AG04450 (cell line): ENCODE measurements at regions of chr12 and their contacts with region 1.

Region 1: DNA sequence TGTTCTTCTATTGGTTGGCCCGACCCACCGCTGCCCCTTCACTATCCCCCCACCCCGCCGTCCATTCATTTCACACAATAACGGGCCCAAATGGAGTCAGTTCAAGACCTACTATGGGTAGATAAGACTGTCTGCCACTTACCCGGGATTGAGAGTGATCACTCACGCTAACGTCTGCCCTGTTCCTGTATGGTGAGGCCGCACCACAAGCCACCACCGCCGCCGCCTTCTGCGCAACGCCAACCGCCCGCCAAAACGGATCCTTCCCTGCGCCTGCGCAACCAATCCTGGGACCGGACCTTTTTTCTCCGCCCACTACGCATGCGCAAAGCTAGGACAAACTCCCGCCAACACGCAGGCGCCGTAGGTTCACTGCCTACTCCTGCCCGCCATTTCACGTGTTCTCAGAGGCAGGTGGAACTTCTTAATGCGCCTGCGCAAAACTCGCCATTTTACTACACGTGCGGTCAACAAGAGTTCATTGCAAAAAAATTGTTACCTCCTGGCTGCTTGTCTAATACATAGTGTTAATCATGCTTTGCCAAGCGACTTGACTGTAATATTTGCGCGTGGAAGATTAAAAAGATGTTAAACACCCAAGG is at the start of gene CBX5:
- DNase-seq: peak; percentile 99
- H3K4me3 ChIP-seq: peak within 1 kb of the TSS; percentile 93
- H3K27ac ChIP-seq: peak within 1 kb of the TSS; percentile 87
- H3K27me3 ChIP-seq: no peaks in the 10 kb centered on the region
- CTCF ChIP-seq: no peak
- polyA plus RNA-seq, gene CBX5: 49.0 and 62.3 TPM in 2 replicates

Region 2: DNA sequence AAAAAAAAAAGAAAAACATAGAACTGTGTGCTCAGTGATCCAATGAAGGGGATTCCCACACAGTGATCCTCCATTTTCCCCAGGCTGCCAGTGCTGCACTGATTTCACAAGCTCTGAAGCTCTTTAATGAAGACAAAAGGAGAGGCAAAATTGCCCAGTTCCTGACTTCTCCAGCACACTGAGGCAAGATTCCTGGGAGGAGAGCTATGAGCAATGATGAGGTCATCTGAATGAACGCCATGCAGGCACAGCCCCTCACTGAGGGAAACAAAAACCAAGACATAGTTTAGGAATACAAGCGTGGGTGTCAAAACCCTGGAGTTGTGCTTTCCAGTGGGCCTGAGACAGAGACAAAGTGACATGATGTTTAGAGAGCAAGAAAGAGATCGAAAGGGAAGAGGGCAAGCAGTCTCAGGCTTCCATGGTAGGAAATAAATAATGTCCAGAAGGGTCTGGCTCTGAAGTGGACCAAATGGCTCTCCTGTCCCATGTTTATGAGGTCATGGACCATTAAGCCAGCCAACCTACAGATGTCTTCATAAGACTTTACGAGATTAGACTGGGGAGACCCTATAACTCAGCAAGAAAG is 50.2 kb before region 1 on chr12:
- CTCF ChIA-PET with region 1: no interaction called
- POLR2A ChIA-PET with region 1: interaction called, 21 read pairs
- DNase-seq: peak; percentile 92
- H3K4me3 ChIP-seq: no peak overlapping the region
- H3K27ac ChIP-seq: peak overlapping the region; percentile 82
- H3K27me3 ChIP-seq: no peaks in the 10 kb centered on the region
- CTCF ChIP-seq: no peak

Region 3: DNA sequence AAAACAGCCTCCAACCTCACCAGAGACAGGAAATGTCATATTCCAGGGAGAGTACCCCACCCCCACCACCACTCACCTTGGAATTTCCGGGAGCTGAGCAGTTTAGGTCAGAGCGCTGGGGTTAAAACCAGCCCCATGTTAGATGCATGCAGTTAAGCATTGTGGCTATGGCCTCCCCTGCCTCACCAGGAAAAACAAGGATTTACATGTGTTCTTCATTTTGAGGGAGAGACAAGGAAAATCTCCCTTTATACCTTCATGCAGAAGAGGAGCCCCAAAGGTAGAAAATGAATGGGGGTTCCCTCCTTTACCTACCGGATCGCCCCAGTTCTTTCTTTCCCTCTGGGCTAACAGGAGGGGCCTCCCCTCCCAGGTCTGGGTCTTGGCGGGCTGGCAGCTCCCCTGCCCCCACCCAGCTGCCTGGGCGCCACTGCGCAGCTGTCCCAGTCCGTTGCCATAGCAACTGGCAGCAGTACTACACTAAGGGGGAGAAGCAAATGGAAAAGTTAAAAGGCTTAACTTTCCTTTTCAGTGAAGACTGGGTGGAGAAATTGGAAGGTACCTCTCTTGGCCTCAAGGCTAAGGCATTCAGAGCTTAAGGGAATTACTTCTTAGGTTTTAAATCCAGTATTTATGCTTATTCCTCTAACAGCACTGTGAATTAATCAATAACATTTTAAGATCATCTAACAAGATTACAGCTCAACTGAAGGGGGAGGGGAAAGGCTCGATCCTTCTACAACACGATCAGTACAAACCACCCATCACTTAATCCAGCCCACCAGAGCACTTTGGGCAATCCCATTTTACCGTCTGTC is 20.6 kb before region 1 on chr12:
- CTCF ChIA-PET with region 1: interaction called, 3 read pairs
- POLR2A ChIA-PET with region 1: interaction called, 36 read pairs
- DNase-seq: peak; percentile 63
- H3K4me3 ChIP-seq: peak overlapping the region; percentile 39
- H3K27ac ChIP-seq: peak overlapping the region; percentile 90
- H3K27me3 ChIP-seq: no peaks in the 10 kb centered on the region
- CTCF ChIP-seq: no peak

Region 4: GRCh38 chr12:54419088-54419892 is 139.3 kb after region 1 on chr12 and contains the start of gene ITGA5:
- CTCF ChIA-PET with region 1: no interaction called
- POLR2A ChIA-PET with region 1: interaction called, 11 read pairs
- DNase-seq: no peak
- H3K4me3 ChIP-seq: peak within 1 kb of the TSS; percentile 91
- H3K27ac ChIP-seq: peak within 1 kb of the TSS; percentile 83
- H3K27me3 ChIP-seq: no peaks in the 10 kb centered on the region
- CTCF ChIP-seq: no peak
- polyA plus RNA-seq, gene ITGA5: 160 and 185 TPM in 2 replicates